ENCODE measurements at regions of chr6 and their contacts with region 1.

Region 1: GRCh38 chr6:143427109-143427817 is 23.2 kb downstream of the ADAT2 start:
- DNase-seq: peak; percentile 42 to 81 (median 72)
- ATAC-seq: peak; percentile 100
- H3K4me3 ChIP-seq: no peak overlapping the region
- H3K4me3 Mint-ChIP-seq: no peak overlapping the region
- H3K27ac ChIP-seq: no peak overlapping the region
- H3K27ac Mint-ChIP-seq: no peak overlapping the region
- H3K4me1 ChIP-seq: no peaks in the 10 kb centered on the region
- H3K4me1 Mint-ChIP-seq: peaks cover 2% of the 10 kb centered on the region
- H3K27me3 ChIP-seq: no peaks in the 10 kb centered on the region
- H3K27me3 Mint-ChIP-seq: no peaks in the 10 kb centered on the region
- CTCF ChIP-seq: peak; percentile 95

Region 2: GRCh38 chr6:141809901-141810300 is 1617.4 kb before region 1 on chr6:
- CTCF ChIA-PET with region 1: no interaction called
- POLR2A ChIA-PET with region 1: no interaction called
- intact Hi-C with region 1: no loop called
- DNase-seq: no peak
- ATAC-seq: no peak
- H3K4me3 ChIP-seq: no peak overlapping the region
- H3K4me3 Mint-ChIP-seq: no peak overlapping the region
- H3K27ac ChIP-seq: no peak overlapping the region
- H3K27ac Mint-ChIP-seq: no peak overlapping the region
- H3K4me1 ChIP-seq: no peaks in the 10 kb centered on the region
- H3K4me1 Mint-ChIP-seq: no peaks in the 10 kb centered on the region
- H3K27me3 ChIP-seq: no peaks in the 10 kb centered on the region
- H3K27me3 Mint-ChIP-seq: no peaks in the 10 kb centered on the region
- CTCF ChIP-seq: no peak

Region 3: GRCh38 chr6:142155895-142156757 is 1271.1 kb before region 1 on chr6:
- CTCF ChIA-PET with region 1: no interaction called
- POLR2A ChIA-PET with region 1: no interaction called
- intact Hi-C with region 1: loop called in 1 of 2 experiments (anchors 5 kb)
- DNase-seq: peak in 2 of 9 experiments; percentile 19 to 44
- ATAC-seq: peak; percentile 76
- H3K4me3 ChIP-seq: no peak overlapping the region
- H3K4me3 Mint-ChIP-seq: no peak overlapping the region
- H3K27ac ChIP-seq: no peak overlapping the region
- H3K27ac Mint-ChIP-seq: peak overlapping the region; percentile 39
- H3K4me1 ChIP-seq: peaks cover 8% of the 10 kb centered on the region
- H3K4me1 Mint-ChIP-seq: peaks cover 69% of the 10 kb centered on the region
- H3K27me3 ChIP-seq: no peaks in the 10 kb centered on the region
- H3K27me3 Mint-ChIP-seq: no peaks in the 10 kb centered on the region
- CTCF ChIP-seq: peak; percentile 83

Region 4: DNA sequence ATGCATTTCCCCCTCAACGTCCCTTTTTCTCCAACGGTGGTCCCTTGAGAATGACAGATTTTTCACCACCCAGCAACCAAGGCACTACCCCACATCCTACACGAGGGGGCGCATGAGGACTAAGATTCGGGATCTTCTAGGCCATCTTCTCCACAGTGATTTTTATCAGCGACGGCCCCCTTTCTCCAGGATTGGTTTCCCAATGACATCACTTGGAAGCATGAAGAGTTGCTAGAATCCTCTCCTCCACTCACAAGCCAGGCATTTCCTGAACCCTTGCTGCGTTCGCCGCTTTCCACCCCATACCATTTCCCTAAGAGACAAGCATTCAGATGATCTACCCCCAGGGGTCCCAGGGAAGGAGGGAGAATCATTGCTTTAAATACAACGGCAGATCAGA is 734.3 kb before region 1 on chr6:
- CTCF ChIA-PET with region 1: interaction called, 59 read pairs
- POLR2A ChIA-PET with region 1: interaction called, 3 read pairs
- intact Hi-C with region 1: loop called (anchors 1 kb)
- DNase-seq: peak; percentile 47 to 82 (median 71)
- ATAC-seq: peak; percentile 88
- H3K4me3 ChIP-seq: no peak overlapping the region
- H3K4me3 Mint-ChIP-seq: no peak overlapping the region
- H3K27ac ChIP-seq: no peak overlapping the region
- H3K27ac Mint-ChIP-seq: no peak overlapping the region
- H3K4me1 ChIP-seq: peaks cover 4% of the 10 kb centered on the region
- H3K4me1 Mint-ChIP-seq: peaks cover 6% of the 10 kb centered on the region
- H3K27me3 ChIP-seq: no peaks in the 10 kb centered on the region
- H3K27me3 Mint-ChIP-seq: no peaks in the 10 kb centered on the region
- CTCF ChIP-seq: peak; percentile 90

Region 5: GRCh38 chr6:143026696-143027449 is 400.4 kb before region 1 on chr6:
- CTCF ChIA-PET with region 1: interaction called, 3 read pairs
- POLR2A ChIA-PET with region 1: no interaction called
- intact Hi-C with region 1: loop called (anchors 5 kb)
- DNase-seq: peak; percentile 10 to 68 (median 55)
- ATAC-seq: peak; percentile 67
- H3K4me3 ChIP-seq: no peak overlapping the region
- H3K4me3 Mint-ChIP-seq: no peak overlapping the region
- H3K27ac ChIP-seq: no peak overlapping the region
- H3K27ac Mint-ChIP-seq: no peak overlapping the region
- H3K4me1 ChIP-seq: no peaks in the 10 kb centered on the region
- H3K4me1 Mint-ChIP-seq: no peaks in the 10 kb centered on the region
- H3K27me3 ChIP-seq: no peaks in the 10 kb centered on the region
- H3K27me3 Mint-ChIP-seq: no peaks in the 10 kb centered on the region
- CTCF ChIP-seq: peak; percentile 62

Region 6: DNA sequence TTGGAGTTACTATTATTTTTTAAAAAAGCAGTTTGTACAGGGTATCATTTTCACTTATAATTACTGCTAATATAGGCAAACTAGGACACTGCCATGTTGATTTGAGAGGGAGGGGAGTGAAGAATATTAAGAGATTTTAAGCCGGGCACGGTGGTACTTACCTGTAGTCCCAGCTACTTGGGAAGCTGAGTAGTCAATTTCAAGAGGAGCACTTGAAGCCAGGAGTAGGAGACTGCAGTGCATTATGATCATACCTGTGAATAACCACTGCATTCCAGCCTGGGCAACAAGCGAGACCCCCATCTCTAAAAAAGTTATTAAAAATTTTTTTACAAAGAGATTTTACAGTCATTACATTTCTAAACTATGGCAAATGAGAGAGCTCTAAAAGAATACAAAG is 12.5 kb before region 1 on chr6:
- CTCF ChIA-PET with region 1: interaction called, 16 read pairs
- POLR2A ChIA-PET with region 1: interaction called, 3 read pairs
- intact Hi-C with region 1: no loop called
- DNase-seq: no peak
- ATAC-seq: no peak
- H3K4me3 ChIP-seq: no peak overlapping the region
- H3K4me3 Mint-ChIP-seq: no peak overlapping the region
- H3K27ac ChIP-seq: no peak overlapping the region
- H3K27ac Mint-ChIP-seq: no peak overlapping the region
- H3K4me1 ChIP-seq: no peaks in the 10 kb centered on the region
- H3K4me1 Mint-ChIP-seq: no peaks in the 10 kb centered on the region
- H3K27me3 ChIP-seq: no peaks in the 10 kb centered on the region
- H3K27me3 Mint-ChIP-seq: peaks cover 3% of the 10 kb centered on the region
- CTCF ChIP-seq: no peak